Gastrocnemius medialis (tissue), 4 donors: ENCODE measurements at regions of chr19 and their contacts with region 1.

Region 1: GRCh38 chr19:35612559-35613321 is at the start of gene HAUS5:
- DNase-seq: peak; percentile 82 to 92
- ATAC-seq: peak; percentile 97 to 99
- H3K4me3 ChIP-seq: peak within 1 kb of the TSS; percentile 78 to 90 (median 86)
- H3K27ac ChIP-seq: peak within 1 kb of the TSS; percentile 67 to 75 (median 72)
- H3K4me1 ChIP-seq: peaks cover 5 to 15% of the 10 kb centered on the region in 2 donors
- H3K27me3 ChIP-seq: no peaks in the 10 kb centered on the region
- CTCF ChIP-seq: peak in 2 of 5 experiments; percentile 16 to 43
- POLR2A ChIP-seq: no peak
- total RNA-seq, gene HAUS5: 2.5 to 4.8 (median 3.4) TPM

Region 2: DNA sequence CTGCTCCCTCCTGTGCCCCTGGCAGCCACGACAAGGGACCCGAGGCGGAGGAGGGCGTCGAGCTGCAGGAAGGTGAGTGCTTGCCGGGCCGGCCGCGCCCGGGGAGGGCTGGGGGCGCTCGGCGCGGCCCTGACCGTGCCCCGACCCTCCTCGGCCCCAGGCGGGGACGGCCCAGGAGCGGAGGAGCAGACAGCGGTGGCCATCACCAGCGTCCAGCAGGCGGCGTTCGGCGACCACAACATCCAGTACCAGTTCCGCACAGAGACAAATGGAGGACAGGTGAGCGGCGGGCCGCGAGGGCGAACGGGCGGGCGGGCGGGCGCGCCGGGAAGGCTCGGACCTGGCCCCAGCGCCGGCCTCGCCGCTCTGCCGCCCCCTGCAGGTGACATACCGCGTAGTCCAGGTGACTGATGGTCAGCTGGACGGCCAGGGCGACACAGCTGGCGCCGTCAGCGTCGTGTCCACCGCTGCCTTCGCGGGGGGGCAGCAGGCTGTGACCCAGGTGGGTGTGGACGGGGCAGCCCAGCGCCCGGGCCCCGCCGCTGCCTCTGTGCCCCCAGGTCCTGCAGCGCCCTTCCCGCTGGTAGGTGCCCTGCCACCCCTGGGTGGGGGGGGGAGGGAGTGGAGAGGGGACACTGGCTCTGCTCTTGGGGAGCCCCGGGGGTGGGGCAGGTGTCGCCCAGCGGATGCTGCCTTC is 343.2 kb before region 1 on chr19:
- in situ Hi-C with region 1: no loop called
- intact Hi-C with region 1: no loop called
- DNase-seq: peak; percentile 72 to 86
- ATAC-seq: peak; percentile 46 to 56
- H3K4me3 ChIP-seq: peak overlapping the region; percentile 65 to 98 (median 72)
- H3K27ac ChIP-seq: peak overlapping the region; percentile 95 to 100 (median 98)
- H3K4me1 ChIP-seq: peaks cover 17 to 31% of the 10 kb centered on the region in 2 donors
- H3K27me3 ChIP-seq: no peaks in the 10 kb centered on the region
- CTCF ChIP-seq: peak; percentile 41 to 95 (median 74)
- POLR2A ChIP-seq: peak; percentile 21 to 27

Region 3: DNA sequence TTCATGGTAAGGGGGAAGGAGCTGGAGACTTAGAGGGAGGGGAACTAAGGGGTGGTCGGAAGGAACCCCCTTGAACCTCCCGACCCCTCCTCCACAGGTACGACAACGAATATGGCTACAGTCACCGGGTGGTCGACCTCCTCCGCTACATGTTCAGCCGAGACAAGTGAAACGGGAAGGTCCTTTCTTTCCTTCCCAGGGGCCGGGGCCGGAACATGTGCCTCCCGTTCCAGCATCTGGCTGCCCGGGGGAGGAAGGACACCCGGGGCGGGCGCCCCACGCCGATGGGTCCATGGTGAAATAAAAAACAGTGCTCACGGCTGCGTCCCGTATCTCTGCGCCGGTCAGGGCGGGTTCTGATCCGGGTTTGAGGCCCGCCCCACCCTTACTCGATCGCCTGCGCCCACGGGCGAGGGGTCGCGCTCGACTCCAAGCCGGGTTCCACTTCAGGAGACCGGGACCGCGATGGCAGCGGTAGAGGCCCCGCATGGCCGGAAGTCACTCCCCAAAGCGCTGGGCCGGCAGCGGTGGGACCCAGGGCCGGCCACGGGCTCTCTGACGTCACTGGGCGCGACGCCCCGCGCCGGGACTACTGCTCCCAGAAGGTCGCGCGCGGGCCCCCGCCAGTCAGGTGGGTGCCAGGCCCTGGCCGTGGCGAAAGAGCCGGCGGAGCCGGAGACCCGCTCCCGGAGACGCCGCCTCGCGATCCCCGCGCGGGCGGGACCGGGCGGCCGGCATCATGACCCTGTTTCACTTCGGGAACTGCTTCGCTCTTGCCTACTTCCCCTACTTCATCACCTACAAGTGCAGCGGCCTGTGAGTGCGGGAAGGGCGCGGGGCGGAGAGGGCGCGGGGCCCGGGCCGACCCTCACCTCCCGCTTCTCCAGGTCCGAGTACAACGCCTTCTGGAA is 67.5 kb before region 1 on chr19 and contains the start of gene TMEM147:
- in situ Hi-C with region 1: no loop called
- intact Hi-C with region 1: loop called (anchors 1 kb)
- DNase-seq: peak; percentile 87
- ATAC-seq: peak; percentile 91 to 92
- H3K4me3 ChIP-seq: peak within 1 kb of the TSS; percentile 71 to 90 (median 80)
- H3K27ac ChIP-seq: peak within 1 kb of the TSS; percentile 80 to 89 (median 87)
- H3K4me1 ChIP-seq: peaks cover 18 to 25% of the 10 kb centered on the region in 2 donors
- H3K27me3 ChIP-seq: no peaks in the 10 kb centered on the region
- CTCF ChIP-seq: no peak
- POLR2A ChIP-seq: peak; percentile 63 to 70
- total RNA-seq, gene TMEM147: 86.2 to 145 (median 119) TPM